ENCODE measurements at regions of chr6 and their contacts with region 1.

Region 1: DNA sequence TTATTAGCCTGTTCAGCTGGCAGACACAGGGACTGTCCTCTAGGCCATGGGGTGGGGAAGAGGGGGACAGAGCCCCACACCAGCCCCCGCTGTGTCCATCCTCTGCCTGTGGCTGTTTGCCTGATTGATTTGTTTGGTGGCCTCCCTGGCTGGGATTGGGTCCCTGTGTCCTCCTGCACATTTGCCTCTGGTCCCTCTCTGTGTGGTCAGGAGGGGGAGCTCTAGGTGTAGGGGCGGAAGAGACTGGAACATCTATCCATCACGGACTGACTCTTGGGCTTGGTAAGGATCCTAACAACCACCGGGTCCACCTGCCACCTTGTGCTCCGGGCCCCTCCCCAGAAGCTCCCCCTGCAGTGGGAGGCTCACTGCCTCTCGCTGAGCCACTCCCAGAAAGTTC is 38.4 kb upstream of the CCDC167 start:
- DNase-seq: peak; percentile 67

Region 2: GRCh38 chr6:37456816-37457560 is 81.1 kb before region 1 on chr6:
- CTCF ChIA-PET with region 1: no interaction called
- POLR2A ChIA-PET with region 1: no interaction called
- DNase-seq: no peak

Region 3: GRCh38 chr6:37691904-37692806 is 154.0 kb after region 1 on chr6:
- CTCF ChIA-PET with region 1: interaction called, 10 read pairs
- POLR2A ChIA-PET with region 1: no interaction called
- DNase-seq: peak; percentile 85

Region 4: DNA sequence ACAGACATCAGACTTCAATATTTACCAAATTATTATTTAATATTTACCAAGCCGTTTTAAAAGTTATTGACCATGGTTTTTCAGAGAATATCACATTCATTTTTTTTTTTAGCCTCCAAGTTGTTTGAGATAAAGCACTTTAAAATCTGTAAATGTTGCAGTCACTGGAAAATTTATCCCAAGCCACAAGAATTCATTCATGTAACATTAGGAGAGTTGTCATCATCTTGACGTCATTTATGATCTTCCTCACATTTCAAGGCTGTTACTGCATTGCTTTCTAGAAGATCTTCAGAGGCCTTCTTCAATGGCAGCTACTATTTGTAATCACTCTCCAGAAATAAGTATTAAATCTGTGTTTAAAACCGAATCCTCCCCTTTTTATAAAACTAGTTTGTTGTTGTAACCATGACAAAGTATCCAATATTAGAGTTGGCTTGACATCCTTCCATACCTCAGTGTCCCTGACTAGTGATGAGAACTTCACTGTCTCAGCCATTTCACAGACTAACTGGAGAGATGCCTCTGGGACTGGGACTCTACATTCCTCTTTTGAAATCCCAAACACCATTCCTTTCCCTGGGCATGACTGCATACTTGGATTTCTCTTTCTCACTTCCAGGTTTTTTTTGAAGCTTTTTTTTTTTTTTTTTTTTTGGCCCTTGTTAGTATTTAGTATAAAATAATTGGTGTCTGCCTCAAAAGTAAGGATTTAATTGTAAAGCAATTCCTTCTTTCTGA is 381.5 kb after region 1 on chr6:
- CTCF ChIA-PET with region 1: no interaction called
- POLR2A ChIA-PET with region 1: no interaction called
- DNase-seq: no peak

Measured in HEK293T (cell line).